ENCODE measurements at regions of chr4 and their contacts with region 1.

Region 1: GRCh38 chr4:103774326-103774825 is 54.6 kb upstream of the TACR3 start:
- DNase-seq: no peak
- ATAC-seq: no peak
- H3K4me3 ChIP-seq: no peak overlapping the region
- H3K27ac ChIP-seq: no peak overlapping the region
- H3K4me1 ChIP-seq: no peaks in the 10 kb centered on the region
- H3K27me3 ChIP-seq: no peaks in the 10 kb centered on the region
- CTCF ChIP-seq: no peak
- EP300 ChIP-seq: no peak
- POLR2A ChIP-seq: no peak
- RAD21 ChIP-seq: no peak

Region 2: GRCh38 chr4:103204111-103204510 is 570.3 kb before region 1 on chr4:
- CTCF ChIA-PET with region 1: no interaction called
- POLR2A ChIA-PET with region 1: no interaction called
- RAD21 ChIA-PET with region 1: no interaction called
- SMC1A ChIA-PET with region 1: no interaction called
- in situ Hi-C with region 1: no loop called
- intact Hi-C with region 1: loop called (anchors 5 kb)
- DNase-seq: no peak
- ATAC-seq: 0 out of 3 replicates have a peak, but pooled peaks have one; percentile 21
- H3K4me3 ChIP-seq: no peak overlapping the region
- H3K27ac ChIP-seq: no peak overlapping the region
- H3K4me1 ChIP-seq: no peaks in the 10 kb centered on the region
- H3K27me3 ChIP-seq: no peaks in the 10 kb centered on the region
- CTCF ChIP-seq: peak; percentile 6 to 41 (median 18); a peak in 3 of 6 replicates
- EP300 ChIP-seq: no peak
- POLR2A ChIP-seq: no peak
- RAD21 ChIP-seq: peak; percentile 45